AG04449 (cell line): ENCODE measurements at regions of chr9 and their contacts with region 1.

Region 1: GRCh38 chr9:77433675-77434445 is 214.3 kb downstream of the GNA14 start:
- DNase-seq: no peak
- H3K4me3 ChIP-seq: no peak overlapping the region; the same call in 1 of the 2 replicates
- CTCF ChIP-seq: peak; percentile 98

Region 2: GRCh38 chr9:77417566-77417965 is 16.3 kb before region 1 on chr9:
- CTCF ChIA-PET with region 1: interaction called, 42 read pairs
- POLR2A ChIA-PET with region 1: no interaction called
- DNase-seq: no peak
- H3K4me3 ChIP-seq: no peak overlapping the region
- CTCF ChIP-seq: no peak

Region 3: DNA sequence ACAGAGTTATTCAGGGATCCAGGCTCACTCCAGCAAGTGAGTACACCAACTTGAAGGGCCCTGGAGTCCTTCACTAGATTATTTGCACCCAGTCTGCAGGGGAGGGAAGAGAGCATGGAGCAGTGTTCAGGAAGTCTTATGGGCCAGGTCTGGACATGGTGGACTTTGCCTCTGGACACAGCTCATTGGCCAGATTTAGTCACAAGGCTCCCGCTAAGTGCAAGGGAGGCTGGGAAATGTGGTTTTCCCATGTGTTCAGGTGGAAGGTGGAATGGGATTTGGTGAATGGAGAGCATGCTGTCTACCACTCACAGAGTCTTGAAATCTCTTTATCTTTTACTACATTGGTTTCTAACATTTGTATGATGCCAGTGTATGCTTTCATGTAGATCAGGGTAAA is 13.8 kb after region 1 on chr9:
- CTCF ChIA-PET with region 1: interaction called, 373 read pairs
- POLR2A ChIA-PET with region 1: interaction called, 3 read pairs
- DNase-seq: no peak
- H3K4me3 ChIP-seq: no peak overlapping the region
- CTCF ChIP-seq: no peak

Region 4: DNA sequence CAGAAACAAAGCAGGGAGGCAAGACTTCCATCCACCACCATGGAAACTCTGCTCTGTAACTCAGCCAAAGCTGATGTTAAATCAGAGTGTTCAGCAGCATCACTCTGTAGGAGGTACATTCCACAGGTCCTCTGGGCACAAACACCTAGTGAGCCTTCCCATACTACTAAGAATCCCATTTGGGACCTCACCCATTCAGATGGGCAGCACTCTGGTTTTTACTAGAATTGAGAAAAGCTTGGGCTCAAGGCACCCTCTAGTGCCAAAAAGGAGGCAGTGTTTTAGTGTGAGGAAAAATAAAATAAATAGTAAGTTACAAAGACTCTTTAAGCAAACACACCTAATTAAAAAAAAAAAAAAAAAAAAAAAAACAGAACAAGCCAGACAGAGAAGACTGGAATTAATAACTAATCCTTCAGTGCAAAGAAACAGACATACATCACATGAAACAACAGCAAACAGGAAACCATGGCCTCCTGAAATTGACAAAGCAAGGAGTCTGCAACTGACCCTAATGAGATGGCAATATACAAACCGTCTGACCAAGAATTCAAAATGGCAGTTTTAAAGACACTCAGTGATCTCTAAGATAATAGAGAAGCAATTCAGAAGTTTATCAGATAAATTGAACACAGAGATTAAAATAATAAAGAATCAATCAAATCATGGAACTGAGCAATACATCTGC is 54.7 kb after region 1 on chr9:
- CTCF ChIA-PET with region 1: interaction called, 106 read pairs
- POLR2A ChIA-PET with region 1: no interaction called
- DNase-seq: no peak
- H3K4me3 ChIP-seq: no peak overlapping the region
- CTCF ChIP-seq: peak; percentile 55

Region 5: GRCh38 chr9:77751341-77752091 is 317.7 kb after region 1 on chr9:
- CTCF ChIA-PET with region 1: interaction called, 50 read pairs
- POLR2A ChIA-PET with region 1: no interaction called
- DNase-seq: peak; percentile 56
- H3K4me3 ChIP-seq: no peak overlapping the region
- CTCF ChIP-seq: peak; percentile 47

Region 6: GRCh38 chr9:77764894-77765780 is 331.3 kb after region 1 on chr9:
- CTCF ChIA-PET with region 1: interaction called, 16 read pairs
- POLR2A ChIA-PET with region 1: no interaction called
- DNase-seq: peak; percentile 44
- H3K4me3 ChIP-seq: no peak overlapping the region
- CTCF ChIP-seq: peak; percentile 48

Region 7: GRCh38 chr9:78121488-78121887 is 687.6 kb after region 1 on chr9:
- CTCF ChIA-PET with region 1: interaction called, 11 read pairs
- POLR2A ChIA-PET with region 1: no interaction called
- DNase-seq: no peak
- H3K4me3 ChIP-seq: no peak overlapping the region
- CTCF ChIP-seq: peak; percentile 52